HepG2 (cell line): ENCODE measurements at regions of chr22 and their contacts with region 1.

Region 1: DNA sequence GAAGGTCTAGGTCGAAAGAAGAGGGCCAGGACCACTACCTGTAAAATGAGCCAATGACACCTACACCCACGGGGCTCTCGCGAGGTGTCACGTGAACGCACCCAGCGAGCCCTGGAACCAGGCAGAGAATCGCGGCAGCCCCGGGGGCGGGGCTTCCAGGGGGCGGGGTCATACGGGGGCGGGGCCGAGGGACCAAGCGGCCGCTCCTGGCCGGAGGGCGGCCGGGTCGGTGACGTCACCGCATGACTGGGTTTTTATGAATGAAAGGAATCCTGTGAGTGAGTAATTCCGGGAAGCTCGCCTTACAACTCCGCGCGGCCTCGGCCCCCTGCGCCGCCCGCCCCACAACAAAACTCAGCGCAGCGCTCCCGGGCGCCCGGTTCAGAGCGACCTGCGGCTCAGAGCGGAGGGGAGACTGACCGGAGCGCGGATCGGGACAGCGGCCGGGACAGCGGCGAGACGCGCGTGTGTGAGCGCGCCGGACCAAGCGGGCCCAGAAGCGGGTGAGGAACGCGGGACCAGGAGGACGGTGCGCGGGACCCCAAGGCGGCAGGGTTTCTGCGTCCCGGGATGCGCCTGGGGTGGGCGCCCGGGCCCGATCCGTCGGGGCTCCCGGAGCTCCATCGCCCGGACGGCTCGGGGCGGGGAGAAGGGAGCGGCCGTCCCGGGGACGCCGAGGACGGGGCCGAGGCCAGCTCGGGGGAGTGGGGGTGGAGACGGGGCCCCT is at the start of gene MAFF:
- DNase-seq: peak; percentile 92
- ATAC-seq: peak; percentile 82
- H3K4me3 ChIP-seq: peak within 1 kb of the TSS; percentile 78 to 88 (median 83)
- H3K27ac ChIP-seq: peak within 1 kb of the TSS; percentile 90
- H3K4me1 ChIP-seq: peaks cover 51% of the 10 kb centered on the region
- H3K27me3 ChIP-seq: no peaks in the 10 kb centered on the region
- CTCF ChIP-seq: no peak
- EP300 ChIP-seq: no peak
- POLR2A ChIP-seq: peak; percentile 68 to 80
- RAD21 ChIP-seq: 0 out of 2 replicates have a peak, but pooled peaks have one; percentile 30
- total RNA-seq, gene MAFF: 3.1 and 5.4 TPM in 2 replicates

Region 2: DNA sequence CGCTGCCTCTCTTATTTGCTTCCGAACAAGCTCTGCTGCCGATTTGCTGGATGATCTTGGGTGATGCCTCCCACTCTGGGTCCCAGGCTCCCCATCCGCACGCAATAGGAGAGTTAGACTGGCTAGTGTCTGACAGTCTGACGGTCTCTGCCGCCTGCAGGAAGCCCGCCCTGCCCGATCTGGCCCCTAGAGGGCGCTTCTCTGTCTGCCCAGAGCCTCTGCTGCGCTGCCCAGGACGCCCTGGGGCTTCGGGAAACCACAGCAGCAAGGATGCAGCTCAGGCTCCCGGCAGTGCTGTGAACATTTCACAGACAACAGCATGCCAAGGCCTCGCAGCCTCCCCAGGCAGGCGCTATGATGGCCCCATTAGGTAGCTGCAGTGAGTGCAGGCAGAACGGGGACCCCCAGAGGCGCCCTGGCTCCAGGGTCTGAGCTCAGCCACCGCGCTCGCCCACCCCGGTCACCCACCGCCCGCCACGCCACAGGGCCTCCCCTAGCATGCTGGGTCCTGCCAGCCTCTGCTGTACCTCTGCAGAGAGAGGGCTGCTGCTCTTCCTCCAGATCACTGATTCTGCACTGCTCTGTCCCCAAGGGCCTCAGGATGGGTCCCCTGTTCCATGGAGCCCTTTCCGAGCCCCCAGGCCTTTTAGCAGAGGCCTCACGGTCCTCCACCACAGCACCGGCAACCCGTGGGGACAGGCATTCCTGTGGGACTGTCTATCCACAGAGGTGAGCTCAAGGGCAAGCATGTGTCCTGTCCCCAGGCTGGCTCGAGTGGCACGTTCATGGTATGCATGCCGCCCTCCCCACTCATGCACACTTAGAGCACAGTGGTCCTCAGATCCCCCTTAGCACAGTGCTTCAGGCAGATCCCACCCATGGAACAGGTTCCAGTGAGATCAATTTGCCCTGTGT is 87.1 kb before region 1 on chr22:
- CTCF ChIA-PET with region 1: no interaction called
- POLR2A ChIA-PET with region 1: interaction called, 17 read pairs
- in situ Hi-C with region 1: loop called (anchors 10 kb)
- intact Hi-C with region 1: loop called (anchors 5 kb)
- DNase-seq: peak; percentile 38
- ATAC-seq: peak; percentile 66
- H3K4me3 ChIP-seq: no peak overlapping the region
- H3K27ac ChIP-seq: no peak overlapping the region
- H3K4me1 ChIP-seq: peaks cover 42% of the 10 kb centered on the region
- H3K27me3 ChIP-seq: no peaks in the 10 kb centered on the region
- CTCF ChIP-seq: peak; percentile 92
- EP300 ChIP-seq: no peak
- POLR2A ChIP-seq: no peak
- RAD21 ChIP-seq: peak; percentile 84

Region 3: DNA sequence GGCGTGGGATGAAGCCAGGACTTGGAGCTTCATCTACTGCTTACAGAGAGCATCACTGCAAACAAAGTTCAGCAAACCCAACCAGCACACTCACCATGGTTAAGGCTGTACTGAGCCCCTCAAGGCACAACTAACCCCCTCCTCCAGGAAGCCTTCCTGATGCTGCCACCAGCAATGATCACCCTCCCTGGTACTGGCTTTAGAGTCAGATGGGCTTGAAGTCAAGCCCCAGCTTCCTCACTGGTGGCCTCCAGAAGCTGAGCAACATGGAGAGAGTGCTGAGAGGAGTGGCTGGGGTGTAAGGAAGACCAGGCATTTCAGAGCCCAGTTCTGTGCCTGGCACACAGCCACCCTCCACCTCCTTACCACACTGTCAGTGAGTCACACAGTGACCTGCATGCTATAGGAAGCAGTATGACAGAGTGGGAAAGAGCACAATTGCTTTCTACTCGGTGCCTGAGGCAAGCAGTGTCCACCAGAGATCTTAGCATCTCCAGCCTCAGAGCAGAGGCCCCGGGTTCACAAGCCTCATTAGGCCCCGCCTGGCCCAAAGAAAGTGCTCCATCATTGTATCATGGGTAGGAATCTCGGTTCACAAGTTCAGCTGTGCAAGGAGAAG is 66.6 kb before region 1 on chr22:
- CTCF ChIA-PET with region 1: no interaction called
- POLR2A ChIA-PET with region 1: no interaction called
- in situ Hi-C with region 1: no loop called
- intact Hi-C with region 1: no loop called
- DNase-seq: no peak
- ATAC-seq: no peak
- H3K4me3 ChIP-seq: no peak overlapping the region
- H3K27ac ChIP-seq: no peak overlapping the region
- H3K4me1 ChIP-seq: no peaks in the 10 kb centered on the region
- H3K27me3 ChIP-seq: no peaks in the 10 kb centered on the region; a peak in 1 of 5 replicates
- CTCF ChIP-seq: no peak
- EP300 ChIP-seq: no peak
- POLR2A ChIP-seq: no peak
- RAD21 ChIP-seq: no peak

Region 4: DNA sequence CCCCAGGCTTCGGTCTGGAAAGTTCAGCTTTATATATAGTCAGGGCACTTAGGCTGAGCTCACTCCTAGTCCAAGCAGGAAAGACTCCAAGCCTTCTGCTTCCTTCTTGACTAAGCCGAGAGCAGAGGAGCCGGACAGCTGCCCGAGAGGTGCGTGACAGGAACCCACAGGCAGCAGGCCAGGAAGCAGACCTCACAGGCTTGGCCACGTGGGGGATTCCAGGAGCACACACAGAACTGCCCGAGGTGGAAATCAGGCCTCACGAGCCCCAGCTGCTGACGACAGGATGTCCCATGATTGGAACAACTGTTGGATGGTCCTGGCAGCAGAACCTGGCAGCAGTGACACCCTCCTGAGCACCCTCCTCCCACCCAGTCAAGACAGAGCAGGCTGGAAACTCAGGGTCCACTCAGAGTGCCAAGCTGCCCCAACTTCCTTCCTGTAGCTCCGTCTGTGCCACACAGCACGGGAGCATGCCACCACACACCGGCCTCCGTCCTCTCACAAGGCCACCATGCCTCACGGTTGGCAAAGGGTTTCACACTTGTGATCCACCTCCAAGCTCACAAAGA is 25.6 kb before region 1 on chr22:
- CTCF ChIA-PET with region 1: no interaction called
- POLR2A ChIA-PET with region 1: interaction called, 26 read pairs
- in situ Hi-C with region 1: no loop called
- intact Hi-C with region 1: no loop called
- DNase-seq: no peak
- ATAC-seq: no peak
- H3K4me3 ChIP-seq: no peak overlapping the region
- H3K27ac ChIP-seq: no peak overlapping the region
- H3K4me1 ChIP-seq: peaks cover 73% of the 10 kb centered on the region
- H3K27me3 ChIP-seq: no peaks in the 10 kb centered on the region; a peak in 1 of 5 replicates
- CTCF ChIP-seq: no peak
- EP300 ChIP-seq: no peak
- POLR2A ChIP-seq: no peak
- RAD21 ChIP-seq: no peak

Region 5: DNA sequence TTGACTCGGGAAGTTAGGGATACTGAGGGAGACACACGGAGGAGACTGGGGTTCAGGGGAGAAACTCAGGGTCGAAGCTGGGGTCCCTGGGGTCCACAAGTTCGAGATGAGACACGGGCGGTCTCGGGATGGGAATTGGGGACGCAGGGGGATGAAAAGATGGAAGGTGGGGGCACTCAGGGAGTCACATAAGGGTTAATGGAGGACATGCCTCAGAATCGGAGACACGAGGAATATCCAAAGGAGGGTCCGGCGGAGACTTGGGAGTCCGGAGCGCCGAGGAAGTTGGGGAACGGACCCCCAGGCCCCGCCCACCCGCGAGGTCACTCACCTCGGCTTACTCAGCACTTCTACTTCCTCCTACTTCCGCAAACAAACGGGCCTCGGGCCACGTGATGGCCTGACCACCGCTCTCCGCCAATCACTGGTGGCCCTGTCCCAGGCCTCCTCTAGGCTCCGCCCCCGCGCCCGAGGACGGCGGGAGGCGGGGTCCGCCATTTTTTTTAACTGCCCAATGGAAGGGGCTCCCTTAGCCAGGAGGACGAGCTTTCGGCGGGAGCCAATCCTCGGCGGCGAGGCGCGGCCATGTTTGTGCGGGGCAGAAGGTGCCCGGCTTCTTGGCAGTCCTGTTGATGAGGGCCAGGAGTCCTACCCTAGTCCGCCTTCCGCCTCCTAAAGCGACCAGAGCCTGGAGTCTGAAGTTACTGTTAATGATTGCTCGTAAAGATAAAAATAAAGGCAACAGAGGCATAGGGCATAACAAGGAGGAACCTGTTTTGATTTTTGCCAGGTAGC is 20.2 kb before region 1 on chr22 and contains the start of gene PLA2G6:
- CTCF ChIA-PET with region 1: no interaction called
- POLR2A ChIA-PET with region 1: interaction called, 26 read pairs
- in situ Hi-C with region 1: no loop called
- intact Hi-C with region 1: loop called (anchors 2 kb)
- DNase-seq: peak; percentile 97
- ATAC-seq: peak; percentile 86
- H3K4me3 ChIP-seq: peak within 1 kb of the TSS; percentile 67 to 86 (median 77)
- H3K27ac ChIP-seq: peak within 1 kb of the TSS; percentile 82
- H3K4me1 ChIP-seq: peaks cover 59% of the 10 kb centered on the region
- H3K27me3 ChIP-seq: no peaks in the 10 kb centered on the region; a peak in 1 of 5 replicates
- CTCF ChIP-seq: no peak
- EP300 ChIP-seq: peak in 1 of 2 experiments; percentile 38; a peak in 1 of 4 replicates
- POLR2A ChIP-seq: peak; percentile 57 to 65
- RAD21 ChIP-seq: 0 out of 2 replicates have a peak, but pooled peaks have one; percentile 9
- total RNA-seq, gene PLA2G6: 1.8 and 4.8 TPM in 2 replicates

Region 6: DNA sequence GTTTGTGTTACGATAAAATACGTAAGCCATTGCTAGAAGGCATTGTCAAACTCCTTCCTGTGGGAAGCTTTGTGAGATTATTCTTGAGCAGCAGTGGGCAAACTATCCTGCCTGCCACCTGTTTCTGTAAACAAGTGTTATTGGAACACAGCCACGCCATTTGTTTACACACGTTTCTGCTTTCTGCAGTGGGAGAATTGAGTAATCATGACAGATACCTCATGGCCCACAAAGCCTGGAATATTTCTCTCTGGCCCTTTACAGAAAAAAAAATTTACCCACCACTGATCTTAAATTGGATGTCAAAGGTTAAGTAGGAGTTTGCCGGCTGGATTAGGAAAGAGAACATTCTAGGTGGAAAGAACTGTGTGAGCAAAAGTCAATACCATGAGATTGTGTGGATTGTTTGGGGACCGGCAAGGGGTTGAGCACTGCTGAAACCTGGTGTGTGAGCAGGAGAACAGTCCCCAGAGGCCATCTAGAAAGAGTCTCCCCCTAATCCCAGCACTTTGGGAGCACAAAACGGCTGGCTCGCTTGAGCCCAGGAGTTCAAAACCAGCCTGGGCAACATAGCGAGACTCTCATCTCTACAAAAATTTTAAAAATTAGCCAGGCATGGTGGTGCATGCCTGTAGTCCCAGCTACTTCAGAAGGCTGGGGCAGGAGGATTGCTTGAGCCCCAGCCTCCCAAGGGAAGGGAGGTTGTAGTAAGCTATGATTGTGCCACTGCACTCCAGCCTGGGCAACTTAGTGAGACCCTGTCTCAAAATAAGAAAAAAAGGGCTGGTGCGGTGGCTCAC is 14.3 kb before region 1 on chr22:
- CTCF ChIA-PET with region 1: no interaction called
- POLR2A ChIA-PET with region 1: interaction called, 6 read pairs
- in situ Hi-C with region 1: no loop called
- intact Hi-C with region 1: loop called (anchors 2 kb)
- DNase-seq: peak; percentile 56
- ATAC-seq: peak; percentile 60
- H3K4me3 ChIP-seq: no peak overlapping the region
- H3K27ac ChIP-seq: peak overlapping the region; percentile 16
- H3K4me1 ChIP-seq: peaks cover 45% of the 10 kb centered on the region
- H3K27me3 ChIP-seq: no peaks in the 10 kb centered on the region
- CTCF ChIP-seq: no peak
- EP300 ChIP-seq: peak in 1 of 2 experiments; percentile 64; a peak in 2 of 4 replicates
- POLR2A ChIP-seq: no peak
- RAD21 ChIP-seq: no peak

Region 7: DNA sequence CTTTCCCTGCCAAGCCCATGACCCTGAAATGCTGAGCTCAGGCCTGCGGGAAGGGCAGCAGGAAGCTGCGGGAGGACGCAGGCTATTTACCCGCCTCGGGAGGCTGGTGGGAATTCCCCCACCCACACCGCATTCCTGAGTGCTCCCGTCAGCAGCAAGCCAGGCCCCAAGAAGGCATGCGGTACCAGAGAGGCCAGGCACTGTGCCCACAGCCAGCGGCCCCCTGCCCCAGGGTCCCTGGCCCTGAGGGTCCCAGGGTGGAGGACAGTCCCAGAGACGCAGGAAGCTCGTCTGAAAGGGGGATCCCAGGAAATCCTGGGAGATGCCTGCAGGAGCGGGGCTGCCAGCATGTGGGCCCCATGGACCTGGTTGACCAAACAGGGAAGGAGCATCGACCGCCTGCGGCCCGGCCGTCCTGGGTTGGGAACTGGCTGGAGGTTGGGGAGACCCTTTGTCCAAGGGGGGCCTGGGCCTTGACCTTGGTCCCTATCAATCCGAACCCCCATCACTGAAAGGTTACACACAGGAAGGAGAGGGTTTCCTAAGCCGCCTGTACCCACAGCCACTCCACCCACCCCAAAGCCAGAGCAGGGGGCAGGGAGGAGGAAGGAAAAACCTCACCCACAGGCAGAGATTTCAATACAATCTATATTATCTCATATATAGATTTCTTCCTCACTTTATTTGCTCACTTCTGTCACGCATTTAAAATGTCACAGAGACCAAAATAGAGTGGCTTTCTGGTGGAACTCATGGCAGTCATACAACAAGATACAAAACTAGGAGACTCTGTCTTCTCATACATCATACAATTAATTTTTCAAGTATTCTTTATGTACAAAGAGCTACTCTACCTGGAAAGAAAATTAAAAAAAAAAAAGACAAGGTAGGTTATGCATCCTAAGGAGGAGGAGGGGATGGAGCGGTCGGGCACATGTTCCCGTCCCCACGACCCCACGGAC is 17.1 kb after region 1 on chr22:
- CTCF ChIA-PET with region 1: no interaction called
- POLR2A ChIA-PET with region 1: interaction called, 22 read pairs
- in situ Hi-C with region 1: no loop called
- intact Hi-C with region 1: no loop called
- DNase-seq: peak; percentile 76
- ATAC-seq: peak; percentile 84
- H3K4me3 ChIP-seq: peak overlapping the region in 1 of 3 experiments; percentile 43; a peak in 1 of 6 replicates
- H3K27ac ChIP-seq: peak overlapping the region; percentile 65
- H3K4me1 ChIP-seq: peaks cover 25% of the 10 kb centered on the region
- H3K27me3 ChIP-seq: no peaks in the 10 kb centered on the region
- CTCF ChIP-seq: no peak
- EP300 ChIP-seq: peak in 1 of 2 experiments; percentile 43; a peak in 1 of 4 replicates
- POLR2A ChIP-seq: peak in 1 of 2 experiments; percentile 29; a peak in 1 of 4 replicates
- RAD21 ChIP-seq: peak; percentile 54

Region 8: DNA sequence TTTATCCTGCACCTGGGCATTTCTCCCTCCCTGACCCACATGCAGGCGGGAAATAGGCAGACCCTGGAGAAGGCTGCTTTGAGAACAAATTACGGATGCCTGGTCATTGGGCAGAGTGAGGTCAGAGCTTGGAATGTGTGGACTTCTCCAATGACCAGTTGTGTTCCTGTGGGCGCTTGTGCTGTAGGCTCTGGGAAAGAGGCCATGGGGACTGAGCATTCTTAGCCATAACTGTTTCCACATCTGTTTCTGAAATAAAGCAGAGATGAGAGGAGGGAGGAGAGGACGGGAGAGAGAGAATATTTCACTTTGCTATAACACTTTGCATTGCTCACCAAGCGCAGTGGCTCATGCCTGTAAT is 82.1 kb after region 1 on chr22:
- CTCF ChIA-PET with region 1: no interaction called
- POLR2A ChIA-PET with region 1: no interaction called
- in situ Hi-C with region 1: no loop called
- intact Hi-C with region 1: no loop called
- DNase-seq: peak; percentile 65
- ATAC-seq: peak; percentile 76
- H3K4me3 ChIP-seq: peak overlapping the region in 1 of 3 experiments; percentile 55; a peak in 1 of 6 replicates
- H3K27ac ChIP-seq: peak overlapping the region; percentile 79
- H3K4me1 ChIP-seq: peaks cover 54% of the 10 kb centered on the region
- H3K27me3 ChIP-seq: no peaks in the 10 kb centered on the region
- CTCF ChIP-seq: no peak
- EP300 ChIP-seq: no peak
- POLR2A ChIP-seq: no peak
- RAD21 ChIP-seq: no peak